Testis (tissue), 5 donors: ENCODE measurements at regions of chr5 and their contacts with region 1.

Region 1: DNA sequence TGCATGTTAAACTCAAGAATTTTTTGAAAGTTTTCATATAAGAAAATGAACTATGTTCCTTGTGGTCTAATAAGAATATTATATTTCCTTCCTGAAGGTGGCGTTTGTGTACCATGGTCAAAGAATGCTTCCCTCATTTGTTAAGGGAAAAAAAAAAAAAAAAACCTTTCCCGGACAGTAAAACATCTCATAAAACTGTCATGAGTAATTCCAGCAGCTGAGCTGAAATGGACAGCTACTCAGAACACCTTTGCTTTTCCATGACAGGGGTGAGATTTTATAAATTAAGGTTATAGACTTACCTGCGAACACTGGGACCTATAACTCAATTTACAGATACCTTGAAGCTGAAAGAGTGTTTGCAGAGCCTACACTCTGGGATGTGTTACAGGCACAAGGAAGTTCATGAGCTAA is 113.2 kb upstream of the RANBP3L start:
- DNase-seq: no peak
- H3K4me3 ChIP-seq: no peak overlapping the region
- H3K27ac ChIP-seq: no peak overlapping the region
- H3K4me1 ChIP-seq: no peaks in the 10 kb centered on the region
- H3K27me3 ChIP-seq: no peaks in the 10 kb centered on the region
- CTCF ChIP-seq: peak; percentile 26 to 52 (median 36)
- POLR2A ChIP-seq: no peak

Region 2: GRCh38 chr5:36690041-36690961 is 275.4 kb after region 1 on chr5:
- intact Hi-C with region 1: loop called (anchors 5 kb)
- DNase-seq: peak; percentile 82
- H3K4me3 ChIP-seq: peak overlapping the region; percentile 57 to 61
- H3K27ac ChIP-seq: peak overlapping the region; percentile 56 to 82
- H3K4me1 ChIP-seq: no peaks in the 10 kb centered on the region
- H3K27me3 ChIP-seq: no peaks in the 10 kb centered on the region
- CTCF ChIP-seq: peak; percentile 72 to 80 (median 75)
- POLR2A ChIP-seq: no peak